Posterior cingulate gyrus (tissue), 11 donors: ENCODE measurements at regions of chr20 and their contacts with region 1.

Region 1: GRCh38 chr20:15927893-15928650 is 645.2 kb downstream of the KIF16B start:
- DNase-seq: no peak

Region 2: GRCh38 chr20:14142171-14142570 is 1785.9 kb before region 1 on chr20:
- intact Hi-C with region 1: loop called (anchors 5 kb)
- DNase-seq: peak in 8 of 10 donors; percentile 33 to 91 (median 54)

Region 3: DNA sequence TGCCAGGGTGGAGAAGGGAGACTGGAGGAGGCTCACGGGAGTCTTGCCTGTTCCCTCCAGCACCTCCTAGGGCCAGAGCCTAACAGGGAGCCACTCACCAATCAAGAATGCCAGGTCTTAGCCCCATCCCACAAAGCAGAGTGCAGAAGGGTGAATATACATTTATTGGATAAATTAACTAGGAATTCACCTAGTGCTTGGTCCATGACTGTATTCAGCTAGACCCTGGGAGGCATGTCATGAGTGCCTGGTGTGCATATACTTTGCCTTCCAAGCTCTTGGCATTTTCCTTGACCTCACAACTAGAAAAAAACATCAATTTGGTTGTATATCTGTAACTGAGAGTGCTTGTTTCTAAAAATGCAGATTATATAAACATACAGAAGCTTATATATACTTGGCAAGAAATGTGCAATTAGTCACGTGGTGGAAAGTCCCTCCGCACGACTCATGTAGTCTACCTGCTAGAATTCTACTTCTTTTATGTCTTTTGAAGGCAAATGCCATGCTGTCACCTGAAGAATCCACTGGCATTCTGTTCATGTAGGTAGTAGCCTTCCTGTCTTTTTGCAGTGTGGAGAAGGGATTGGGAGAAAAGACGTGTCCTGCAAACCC is 345.8 kb before region 1 on chr20:
- intact Hi-C with region 1: no loop called
- DNase-seq: no peak